HepG2 (cell line): ENCODE measurements at regions of chr1 and their contacts with region 1.

Region 1: DNA sequence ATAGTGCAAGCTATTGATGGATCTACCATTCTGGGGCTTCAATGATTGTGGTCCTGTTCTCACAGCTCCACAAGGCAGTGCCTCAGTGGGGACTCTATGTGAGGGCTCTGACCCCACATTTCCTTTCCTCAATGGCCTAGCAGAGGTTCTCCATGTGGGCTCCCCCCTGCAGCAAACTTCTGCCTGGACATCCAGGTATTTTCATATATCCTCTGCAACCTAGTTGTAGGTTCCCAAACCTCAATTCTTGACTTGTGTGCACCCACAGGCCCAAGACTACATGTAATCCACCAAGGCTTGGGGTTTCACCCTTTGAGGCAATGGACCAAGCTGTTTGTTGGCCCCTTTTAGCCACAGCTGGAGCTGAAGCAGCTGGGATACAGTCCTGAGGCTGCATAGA is 35.9 kb upstream of the CFHR3 start:
- DNase-seq: no peak
- ATAC-seq: no peak
- H3K4me3 ChIP-seq: no peak overlapping the region
- H3K27ac ChIP-seq: no peak overlapping the region
- H3K4me1 ChIP-seq: no peaks in the 10 kb centered on the region
- H3K27me3 ChIP-seq: no peaks in the 10 kb centered on the region
- CTCF ChIP-seq: no peak
- EP300 ChIP-seq: no peak
- POLR2A ChIP-seq: no peak
- RAD21 ChIP-seq: no peak

Region 2: DNA sequence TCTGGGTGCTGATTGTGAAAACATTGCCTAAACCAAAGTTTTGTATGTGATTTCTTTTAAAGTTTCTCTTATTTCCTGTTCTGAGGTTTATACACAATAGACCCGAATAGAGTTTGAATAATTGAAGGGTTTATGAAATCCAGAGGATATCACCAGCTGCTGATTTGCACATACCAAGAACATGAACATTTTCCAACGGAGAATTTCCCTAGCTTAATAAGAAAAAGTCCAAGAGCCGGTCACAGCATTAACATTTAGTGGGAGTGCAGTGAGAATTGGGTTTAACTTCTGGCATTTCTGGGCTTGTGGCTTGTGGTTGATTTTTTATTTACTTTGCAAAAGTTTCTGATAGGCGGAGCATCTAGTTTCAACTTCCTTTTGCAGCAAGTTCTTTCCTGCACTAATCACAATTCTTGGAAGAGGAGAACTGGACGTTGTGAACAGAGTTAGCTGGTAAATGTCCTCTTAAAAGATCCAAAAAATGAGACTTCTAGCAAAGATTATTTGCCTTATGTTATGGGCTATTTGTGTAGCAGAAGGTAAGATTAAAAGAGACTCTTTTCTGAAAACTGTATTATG is 87.0 kb before region 1 on chr1 and contains the start of gene CFH:
- CTCF ChIA-PET with region 1: no interaction called
- POLR2A ChIA-PET with region 1: no interaction called
- in situ Hi-C with region 1: no loop called
- intact Hi-C with region 1: no loop called
- DNase-seq: no peak
- ATAC-seq: no peak
- H3K4me3 ChIP-seq: no peak within 1 kb of the TSS
- H3K27ac ChIP-seq: no peak within 1 kb of the TSS
- H3K4me1 ChIP-seq: no peaks in the 10 kb centered on the region
- H3K27me3 ChIP-seq: no peaks in the 10 kb centered on the region
- CTCF ChIP-seq: no peak
- EP300 ChIP-seq: no peak
- POLR2A ChIP-seq: no peak
- RAD21 ChIP-seq: no peak
- total RNA-seq, gene CFH: not detected in 2 replicates

Region 3: GRCh38 chr1:196667131-196667530 is 71.6 kb before region 1 on chr1:
- CTCF ChIA-PET with region 1: no interaction called
- POLR2A ChIA-PET with region 1: no interaction called
- in situ Hi-C with region 1: no loop called
- intact Hi-C with region 1: no loop called
- DNase-seq: no peak
- ATAC-seq: no peak
- H3K4me3 ChIP-seq: no peak overlapping the region
- H3K27ac ChIP-seq: no peak overlapping the region
- H3K4me1 ChIP-seq: no peaks in the 10 kb centered on the region
- H3K27me3 ChIP-seq: no peaks in the 10 kb centered on the region
- CTCF ChIP-seq: no peak
- EP300 ChIP-seq: no peak
- POLR2A ChIP-seq: no peak
- RAD21 ChIP-seq: no peak

Region 4: GRCh38 chr1:197062692-197063091 is 324.0 kb after region 1 on chr1:
- CTCF ChIA-PET with region 1: no interaction called
- POLR2A ChIA-PET with region 1: no interaction called
- in situ Hi-C with region 1: loop called (anchors 25 kb)
- intact Hi-C with region 1: loop called (anchors 1 kb)
- DNase-seq: no peak
- ATAC-seq: no peak
- H3K4me3 ChIP-seq: no peak overlapping the region
- H3K27ac ChIP-seq: no peak overlapping the region
- H3K4me1 ChIP-seq: peaks cover 15% of the 10 kb centered on the region
- H3K27me3 ChIP-seq: no peaks in the 10 kb centered on the region
- CTCF ChIP-seq: no peak
- EP300 ChIP-seq: no peak
- POLR2A ChIP-seq: no peak
- RAD21 ChIP-seq: no peak

Region 5: GRCh38 chr1:197156691-197157090 is 418.0 kb after region 1 on chr1:
- CTCF ChIA-PET with region 1: no interaction called
- POLR2A ChIA-PET with region 1: no interaction called
- in situ Hi-C with region 1: no loop called
- intact Hi-C with region 1: loop called (anchors 5 kb)
- DNase-seq: no peak
- ATAC-seq: no peak
- H3K4me3 ChIP-seq: no peak overlapping the region
- H3K27ac ChIP-seq: no peak overlapping the region
- H3K4me1 ChIP-seq: peaks cover 9% of the 10 kb centered on the region
- H3K27me3 ChIP-seq: no peaks in the 10 kb centered on the region
- CTCF ChIP-seq: 0 out of 2 replicates have a peak, but pooled peaks have one; percentile 13
- EP300 ChIP-seq: no peak
- POLR2A ChIP-seq: no peak
- RAD21 ChIP-seq: no peak

Region 6: GRCh38 chr1:197339106-197340060 is 600.7 kb after region 1 on chr1:
- CTCF ChIA-PET with region 1: no interaction called
- POLR2A ChIA-PET with region 1: no interaction called
- in situ Hi-C with region 1: no loop called
- intact Hi-C with region 1: loop called (anchors 5 kb)
- DNase-seq: no peak
- ATAC-seq: no peak
- H3K4me3 ChIP-seq: no peak overlapping the region
- H3K27ac ChIP-seq: no peak overlapping the region
- H3K4me1 ChIP-seq: no peaks in the 10 kb centered on the region
- H3K27me3 ChIP-seq: no peaks in the 10 kb centered on the region; a peak in 1 of 5 replicates
- CTCF ChIP-seq: no peak
- EP300 ChIP-seq: no peak
- POLR2A ChIP-seq: no peak
- RAD21 ChIP-seq: no peak

Region 7: GRCh38 chr1:197356723-197357533 is 618.2 kb after region 1 on chr1:
- CTCF ChIA-PET with region 1: interaction called, 3 read pairs
- POLR2A ChIA-PET with region 1: no interaction called
- in situ Hi-C with region 1: loop called (anchors 25 kb)
- intact Hi-C with region 1: loop called (anchors 5 kb)
- DNase-seq: peak; percentile 32
- ATAC-seq: peak; percentile 86
- H3K4me3 ChIP-seq: no peak overlapping the region
- H3K27ac ChIP-seq: no peak overlapping the region
- H3K4me1 ChIP-seq: no peaks in the 10 kb centered on the region
- H3K27me3 ChIP-seq: no peaks in the 10 kb centered on the region
- CTCF ChIP-seq: peak; percentile 76
- EP300 ChIP-seq: no peak
- POLR2A ChIP-seq: no peak
- RAD21 ChIP-seq: peak; percentile 40; the same call in 1 of the 2 replicates